Activated T-helper 1 cell treated with anti-CD3 and anti-CD28 coated beads, Interleukin-12 subunit alpha, Interleukin-12 subunit beta, Interleukin-2, Interleukin-4 antibody, amounts not matched to agents 30 ng/mL and 10 ng/mL and 1 ng/mL, durations not matched to agents 14 hours and 24 hours and 36 hours (primary cell): ENCODE measurements at regions of chr2 and their contacts with region 1.

Region 1: DNA sequence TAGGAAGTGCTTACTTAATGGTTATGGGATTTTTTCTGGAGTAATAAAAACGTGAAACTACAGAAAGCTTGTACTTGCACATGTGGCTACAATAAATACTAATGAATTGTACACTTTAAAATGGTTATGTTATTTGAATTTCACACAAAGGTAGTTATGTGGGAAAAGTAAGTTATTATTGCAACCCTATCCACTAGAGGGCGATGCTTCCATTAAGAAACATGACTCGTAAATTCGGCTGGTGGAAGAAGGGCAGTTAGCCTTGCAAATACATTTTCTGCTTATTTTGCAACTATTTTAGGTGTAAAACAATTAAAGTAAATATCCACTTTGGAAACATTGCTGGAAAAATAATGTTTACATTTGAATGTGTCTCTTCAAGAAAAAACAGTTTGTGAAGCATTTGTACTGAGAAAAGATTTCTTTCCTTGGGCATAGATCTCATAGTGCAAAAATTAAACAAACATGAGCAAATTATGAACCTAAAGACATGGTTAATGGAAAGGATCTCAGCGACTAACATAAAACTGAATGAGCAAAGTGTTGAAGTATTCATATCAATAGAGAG is 68.1 kb upstream of the CSRNP3 start:
- DNase-seq: no peak
- H3K4me3 Mint-ChIP-seq: no peak overlapping the region
- H3K27ac Mint-ChIP-seq: no peak overlapping the region
- H3K4me1 Mint-ChIP-seq: no peaks in the 10 kb centered on the region
- H3K27me3 Mint-ChIP-seq: peaks cover 27% of the 10 kb centered on the region

Region 2: GRCh38 chr2:165573534-165574461 is 172.4 kb after region 1 on chr2:
- intact Hi-C with region 1: no loop called
- DNase-seq: no peak
- H3K4me3 Mint-ChIP-seq: no peak overlapping the region
- H3K27ac Mint-ChIP-seq: no peak overlapping the region
- H3K4me1 Mint-ChIP-seq: no peaks in the 10 kb centered on the region
- H3K27me3 Mint-ChIP-seq: peaks cover 5% of the 10 kb centered on the region

Region 3: GRCh38 chr2:165601928-165602521 is 200.7 kb after region 1 on chr2:
- intact Hi-C with region 1: no loop called
- DNase-seq: no peak
- H3K4me3 Mint-ChIP-seq: no peak overlapping the region
- H3K27ac Mint-ChIP-seq: no peak overlapping the region
- H3K4me1 Mint-ChIP-seq: no peaks in the 10 kb centered on the region
- H3K27me3 Mint-ChIP-seq: peaks cover 3% of the 10 kb centered on the region

Region 4: DNA sequence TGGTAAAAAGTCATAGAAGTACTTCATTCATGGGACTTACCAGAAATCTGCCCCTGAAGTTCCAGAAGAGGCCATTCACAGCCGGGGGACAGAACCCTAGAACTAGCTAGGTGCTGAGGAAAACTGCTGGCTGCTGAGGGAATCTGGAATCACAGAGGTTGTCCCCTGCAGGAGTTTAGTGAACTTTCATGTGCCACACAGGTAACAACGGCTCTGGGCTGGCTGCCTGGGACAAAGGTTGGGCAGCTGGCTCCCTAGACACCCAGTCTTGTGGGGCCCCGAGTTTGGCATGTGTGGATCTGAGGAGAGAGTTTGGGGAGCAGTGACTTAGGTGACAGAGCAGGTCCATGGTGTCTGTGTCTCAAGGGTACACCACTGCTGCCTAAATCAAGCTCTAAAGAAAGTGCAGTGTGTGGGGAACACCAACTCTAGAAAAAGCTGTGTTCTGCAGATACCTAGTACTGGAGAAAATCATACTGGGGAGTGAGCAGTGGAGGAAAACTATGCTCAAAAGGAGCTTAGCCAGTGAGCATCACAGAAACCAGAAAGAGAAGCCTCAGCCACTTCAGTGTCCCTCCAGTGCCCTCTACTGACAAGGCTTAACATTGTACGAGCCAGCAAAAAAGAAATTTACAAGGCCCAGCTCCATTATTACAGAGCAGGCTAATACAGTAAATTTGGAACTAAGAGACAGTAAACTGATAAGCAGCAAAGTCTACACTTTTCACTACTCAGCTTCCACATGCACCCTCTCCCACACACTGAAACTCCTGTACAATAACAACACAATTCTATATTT is 377.5 kb after region 1 on chr2:
- intact Hi-C with region 1: loop called (anchors 1 kb)
- DNase-seq: no peak
- H3K4me3 Mint-ChIP-seq: no peak overlapping the region
- H3K27ac Mint-ChIP-seq: no peak overlapping the region
- H3K4me1 Mint-ChIP-seq: peaks cover 25% of the 10 kb centered on the region
- H3K27me3 Mint-ChIP-seq: no peaks in the 10 kb centered on the region